ENCODE measurements at regions of chr5 and their contacts with region 1.

Region 1: GRCh38 chr5:73215891-73216610 is 43.1 kb downstream of the TMEM174 start:
- DNase-seq: peak; percentile 73
- ATAC-seq: peak; percentile 98
- H3K4me3 ChIP-seq: peak overlapping the region; percentile 44
- H3K27ac ChIP-seq: peak overlapping the region; percentile 56; the same call in 1 of the 2 replicates
- H3K4me1 ChIP-seq: 0 out of 2 replicates have a peak, but pooled peaks cover 2% of the 10 kb centered on the region
- H3K27me3 ChIP-seq: 0 out of 2 replicates have a peak, but pooled peaks cover 3% of the 10 kb centered on the region
- CTCF ChIP-seq: peak; percentile 80
- POLR2A ChIP-seq: no peak
- RAD21 ChIP-seq: peak; percentile 65

Region 2: DNA sequence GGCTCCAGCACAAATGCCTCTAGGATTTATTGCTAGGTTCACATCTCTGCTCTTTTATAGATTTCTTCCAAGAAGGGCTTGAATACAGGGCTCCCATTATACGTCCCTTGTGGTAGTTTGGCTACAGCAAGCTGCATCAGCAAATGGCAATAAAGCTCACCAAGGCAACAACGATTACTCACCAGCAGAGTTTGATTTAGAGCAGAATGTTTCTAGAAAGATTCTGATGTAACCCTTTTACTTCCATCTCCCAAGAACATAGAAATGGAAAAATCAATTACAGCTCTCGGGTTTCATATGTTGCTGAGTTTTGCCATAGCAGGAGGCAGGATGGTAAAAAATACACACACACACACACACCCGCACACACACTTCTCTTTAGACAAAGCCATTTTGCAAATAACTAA is 523.8 kb before region 1 on chr5:
- CTCF ChIA-PET with region 1: no interaction called
- POLR2A ChIA-PET with region 1: no interaction called
- dilution Hi-C with region 1: no loop called
- in situ Hi-C with region 1: no loop called
- intact Hi-C with region 1: no loop called
- DNase-seq: peak; percentile 30
- ATAC-seq: no peak
- H3K4me3 ChIP-seq: no peak overlapping the region
- H3K27ac ChIP-seq: no peak overlapping the region
- H3K4me1 ChIP-seq: peaks cover 3% of the 10 kb centered on the region
- H3K27me3 ChIP-seq: peaks cover 5% of the 10 kb centered on the region; the same call in 1 of the 2 replicates
- CTCF ChIP-seq: no peak
- POLR2A ChIP-seq: no peak
- RAD21 ChIP-seq: no peak

Region 3: DNA sequence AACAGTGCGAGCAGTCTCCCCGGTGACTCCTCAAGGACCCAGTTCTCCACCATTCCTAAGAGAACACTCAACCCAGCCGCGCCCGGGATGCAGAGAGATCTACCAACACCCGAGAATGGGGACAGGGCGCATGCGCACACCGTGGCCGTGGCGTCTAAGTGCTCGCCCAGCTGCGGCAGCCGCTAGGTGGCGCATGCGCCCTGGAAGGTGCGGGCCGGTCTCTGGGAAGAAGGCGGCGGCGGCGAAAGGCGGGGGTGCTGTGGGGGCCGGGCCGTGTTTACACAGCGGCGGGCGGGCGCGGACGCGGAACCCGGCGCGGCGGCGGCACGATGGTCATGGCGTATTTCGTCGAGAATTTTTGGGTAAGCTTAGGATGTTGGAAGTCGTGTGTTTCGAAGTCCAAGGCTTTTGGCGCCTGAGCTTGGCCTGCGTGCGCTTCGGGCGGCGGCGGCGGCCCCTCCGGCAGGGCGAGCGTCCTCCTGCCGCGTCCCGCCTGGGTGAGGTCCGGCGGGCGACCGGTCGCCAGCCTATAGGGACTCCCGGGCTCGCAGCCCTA is 260.2 kb before region 1 on chr5 and contains the start of gene FCHO2:
- CTCF ChIA-PET with region 1: no interaction called
- POLR2A ChIA-PET with region 1: no interaction called
- dilution Hi-C with region 1: no loop called
- in situ Hi-C with region 1: no loop called
- intact Hi-C with region 1: loop called (anchors 2 kb)
- DNase-seq: peak; percentile 95
- ATAC-seq: peak; percentile 84
- H3K4me3 ChIP-seq: peak within 1 kb of the TSS; percentile 81
- H3K27ac ChIP-seq: peak within 1 kb of the TSS; percentile 96
- H3K4me1 ChIP-seq: peaks cover 13% of the 10 kb centered on the region
- H3K27me3 ChIP-seq: no peaks in the 10 kb centered on the region
- CTCF ChIP-seq: peak; percentile 81
- POLR2A ChIP-seq: peak; percentile 74
- RAD21 ChIP-seq: peak; percentile 61
- total RNA-seq, gene FCHO2: 13.1 and 23.5 TPM in 2 replicates

Region 4: GRCh38 chr5:73298772-73299630 is 83.0 kb after region 1 on chr5:
- CTCF ChIA-PET with region 1: interaction called, 5 read pairs
- POLR2A ChIA-PET with region 1: no interaction called
- dilution Hi-C with region 1: no loop called
- in situ Hi-C with region 1: no loop called
- intact Hi-C with region 1: loop called (anchors 5 kb)
- DNase-seq: peak; percentile 85
- ATAC-seq: peak; percentile 84
- H3K4me3 ChIP-seq: peak overlapping the region; percentile 45
- H3K27ac ChIP-seq: peak overlapping the region; percentile 86
- H3K4me1 ChIP-seq: peaks cover 9% of the 10 kb centered on the region; the same call in 1 of the 2 replicates
- H3K27me3 ChIP-seq: peaks cover 6% of the 10 kb centered on the region; the same call in 1 of the 2 replicates
- CTCF ChIP-seq: peak; percentile 41
- POLR2A ChIP-seq: no peak
- RAD21 ChIP-seq: 0 out of 2 replicates have a peak, but pooled peaks have one; percentile 28

Region 5: DNA sequence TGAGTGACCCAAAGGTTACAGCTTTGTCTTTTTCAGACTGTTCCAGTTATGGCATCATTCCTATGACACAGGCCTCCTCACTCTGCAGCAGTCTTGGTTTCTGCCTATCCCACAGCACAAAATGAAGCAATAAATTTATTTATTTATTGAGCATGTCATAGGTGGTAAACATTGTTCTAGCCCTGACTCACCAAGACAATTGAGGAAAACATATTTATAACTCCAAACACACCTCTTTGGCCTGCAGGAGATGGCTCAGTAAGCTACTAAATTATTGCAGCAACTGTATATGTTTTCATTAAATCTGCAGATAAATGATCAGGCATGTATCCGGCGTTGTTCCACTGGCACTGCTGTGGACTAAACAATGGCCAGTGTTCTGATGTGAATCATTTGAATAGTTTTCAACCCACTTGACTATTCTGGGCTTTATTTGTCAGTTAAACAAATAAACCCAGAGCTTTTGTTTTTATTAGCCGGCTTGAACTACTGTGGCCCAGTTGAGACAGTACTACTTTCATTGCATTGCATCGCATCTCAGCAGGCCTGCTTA is 149.3 kb after region 1 on chr5:
- CTCF ChIA-PET with region 1: interaction called, 5 read pairs
- POLR2A ChIA-PET with region 1: no interaction called
- dilution Hi-C with region 1: no loop called
- in situ Hi-C with region 1: no loop called
- intact Hi-C with region 1: loop called (anchors 1 kb)
- DNase-seq: peak; percentile 96
- ATAC-seq: peak; percentile 83
- H3K4me3 ChIP-seq: no peak overlapping the region
- H3K27ac ChIP-seq: no peak overlapping the region
- H3K4me1 ChIP-seq: peaks cover 21% of the 10 kb centered on the region
- H3K27me3 ChIP-seq: no peaks in the 10 kb centered on the region
- CTCF ChIP-seq: no peak
- POLR2A ChIP-seq: no peak
- RAD21 ChIP-seq: no peak; the same call in 1 of the 2 replicates

Region 6: DNA sequence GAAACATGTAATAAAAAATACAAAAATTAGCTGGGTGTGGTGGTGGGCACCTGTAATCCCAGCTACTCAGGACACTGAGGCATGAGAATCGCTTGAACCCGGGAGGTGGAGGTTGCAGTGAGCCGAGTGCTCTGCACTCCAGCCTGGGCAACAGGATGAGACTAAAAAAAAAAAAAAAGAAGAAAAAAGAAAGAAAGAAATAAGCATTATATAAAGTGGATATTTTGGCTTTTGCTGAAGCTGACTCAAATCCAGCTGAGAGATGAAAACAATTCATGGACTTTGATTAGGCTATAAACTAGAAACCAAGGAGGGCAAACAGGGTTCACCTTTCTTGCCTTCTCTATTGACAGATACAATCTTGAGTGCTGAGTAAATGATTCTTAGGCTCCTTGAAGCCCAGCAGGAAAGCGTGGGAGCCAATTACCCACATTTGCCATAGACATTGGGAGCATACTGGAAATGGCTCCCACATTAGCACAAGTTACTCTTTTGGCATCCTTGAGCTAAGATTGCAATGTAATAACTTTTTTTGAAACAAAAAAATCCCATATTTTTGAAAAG is 279.8 kb after region 1 on chr5:
- CTCF ChIA-PET with region 1: no interaction called
- POLR2A ChIA-PET with region 1: interaction called, 11 read pairs
- dilution Hi-C with region 1: no loop called
- in situ Hi-C with region 1: no loop called
- intact Hi-C with region 1: no loop called
- DNase-seq: no peak
- ATAC-seq: no peak
- H3K4me3 ChIP-seq: no peak overlapping the region
- H3K27ac ChIP-seq: no peak overlapping the region
- H3K4me1 ChIP-seq: peaks cover 2% of the 10 kb centered on the region; the same call in 1 of the 2 replicates
- H3K27me3 ChIP-seq: peaks cover 1% of the 10 kb centered on the region; the same call in 1 of the 2 replicates
- CTCF ChIP-seq: no peak
- POLR2A ChIP-seq: no peak
- RAD21 ChIP-seq: no peak

Region 7: GRCh38 chr5:73822997-73823355 is 606.9 kb after region 1 on chr5:
- CTCF ChIA-PET with region 1: no interaction called
- POLR2A ChIA-PET with region 1: no interaction called
- dilution Hi-C with region 1: no loop called
- in situ Hi-C with region 1: no loop called
- intact Hi-C with region 1: no loop called
- DNase-seq: peak; percentile 60
- ATAC-seq: no peak; the same call in 1 of the 2 replicates
- H3K4me3 ChIP-seq: no peak overlapping the region
- H3K27ac ChIP-seq: no peak overlapping the region
- H3K4me1 ChIP-seq: peaks cover 30% of the 10 kb centered on the region
- H3K27me3 ChIP-seq: no peaks in the 10 kb centered on the region
- CTCF ChIP-seq: no peak
- POLR2A ChIP-seq: no peak
- RAD21 ChIP-seq: no peak